Right ventricle myocardium superior (tissue), 1 donor: ENCODE measurements at regions of chr6 and their contacts with region 1.

Region 1: DNA sequence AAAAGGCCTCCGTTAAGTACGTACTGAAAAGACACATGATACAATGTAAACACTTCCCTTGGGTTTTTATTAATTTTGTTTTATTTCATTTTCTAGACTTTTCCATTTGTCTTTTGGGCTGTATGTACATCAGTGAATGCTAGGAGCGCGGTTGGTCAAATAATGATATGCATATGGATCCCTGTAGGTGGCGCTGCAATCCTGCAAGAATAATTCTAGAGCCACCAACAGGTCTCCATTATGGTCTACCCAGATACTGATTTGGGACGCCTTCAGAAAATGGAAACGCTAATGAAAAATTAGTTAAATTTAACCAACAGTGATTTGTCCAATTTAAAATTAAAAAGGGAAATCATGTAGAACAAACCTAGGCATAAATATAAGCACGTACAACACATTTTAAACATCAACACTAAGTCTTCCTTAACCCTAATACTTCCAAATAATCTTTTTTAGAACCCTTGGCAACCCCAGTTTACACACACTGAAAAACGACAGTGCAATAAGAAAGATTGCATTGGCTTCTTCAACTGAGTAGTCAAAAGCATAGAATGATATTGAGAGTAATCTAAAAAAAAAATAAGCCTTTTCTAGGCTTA is 433.5 kb downstream of the RFPL4B start:
- DNase-seq: peak; percentile 45
- ATAC-seq: peak; percentile 94

Region 2: GRCh38 chr6:113182370-113183141 is 402.0 kb after region 1 on chr6:
- intact Hi-C with region 1: loop called (anchors 10 kb)
- DNase-seq: no peak
- ATAC-seq: no peak

Region 3: DNA sequence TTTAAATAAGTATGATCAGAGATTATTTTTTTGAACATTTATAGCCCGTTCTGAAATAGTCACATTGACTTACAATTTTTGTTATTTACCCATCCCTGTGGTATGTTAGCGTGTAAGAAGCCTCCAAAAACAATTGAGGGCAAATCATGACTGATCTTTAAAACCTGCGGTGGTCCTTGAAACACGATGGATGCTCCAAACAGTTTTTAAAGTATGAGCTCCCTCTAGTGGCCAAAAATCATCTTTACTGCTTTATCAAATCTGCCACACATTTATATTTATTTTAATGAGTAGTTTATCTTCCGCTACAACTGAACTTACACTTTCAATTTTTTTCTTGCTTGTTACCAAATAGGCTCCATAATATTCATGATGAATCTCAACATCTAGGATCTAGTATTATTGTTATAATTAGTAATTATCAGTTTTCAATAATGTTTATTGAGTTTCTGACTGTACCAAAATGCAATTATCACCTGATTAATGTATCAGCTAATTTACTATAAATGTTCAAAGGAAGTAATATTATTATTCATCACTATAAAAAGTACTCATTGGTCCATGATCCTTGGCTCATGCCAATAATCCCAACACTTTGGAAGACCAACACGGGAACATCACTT is 1128.7 kb after region 1 on chr6:
- intact Hi-C with region 1: loop called (anchors 10 kb)
- DNase-seq: no peak
- ATAC-seq: no peak